ENCODE measurements at regions of chr18 and their contacts with region 1.

Region 1: GRCh38 chr18:50356036-50356945 is 18.6 kb upstream of the SKA1 start:
- DNase-seq: no peak
- H3K4me3 Mint-ChIP-seq: no peak overlapping the region
- H3K27ac Mint-ChIP-seq: no peak overlapping the region
- H3K4me1 Mint-ChIP-seq: peaks cover 8% of the 10 kb centered on the region
- H3K27me3 Mint-ChIP-seq: peaks cover 5% of the 10 kb centered on the region

Region 2: DNA sequence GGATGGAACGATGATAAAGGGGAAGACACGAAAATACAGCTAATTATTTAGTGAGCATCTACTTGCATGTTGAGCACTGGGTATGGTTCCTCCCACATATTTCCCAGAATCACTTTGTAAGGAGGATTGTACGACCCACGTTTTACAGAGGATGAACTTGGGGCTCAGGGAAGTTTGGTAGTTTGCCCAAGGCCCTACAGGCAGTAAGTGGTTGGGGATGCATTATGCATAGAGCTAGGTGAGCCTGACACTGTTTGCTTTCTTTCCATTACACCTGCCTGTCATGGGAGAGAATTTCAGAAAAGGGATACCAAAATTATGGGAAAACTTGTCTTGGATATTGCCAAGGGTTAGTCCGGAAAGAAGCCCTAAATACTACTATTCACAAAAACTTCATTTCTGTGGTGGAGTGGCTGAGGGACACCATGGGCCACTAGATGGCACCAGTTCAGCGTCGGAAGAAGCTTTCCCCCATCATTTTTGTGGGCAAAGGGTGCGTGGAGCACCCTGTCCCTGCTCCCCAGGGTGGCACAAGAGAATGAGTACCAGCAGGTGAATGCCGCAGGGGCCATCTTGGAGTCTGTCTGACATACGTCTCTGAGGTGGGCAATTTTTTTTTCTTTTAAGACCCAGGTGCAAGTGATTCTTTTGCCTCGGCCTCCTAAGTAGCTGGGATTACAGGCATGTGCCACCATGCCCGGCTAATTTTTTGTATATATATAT is 845.7 kb before region 1 on chr18:
- CTCF ChIA-PET with region 1: no interaction called
- intact Hi-C with region 1: loop called (anchors 10 kb)
- DNase-seq: peak; percentile 60
- H3K4me3 Mint-ChIP-seq: no peak overlapping the region
- H3K27ac Mint-ChIP-seq: no peak overlapping the region
- H3K4me1 Mint-ChIP-seq: no peaks in the 10 kb centered on the region
- H3K27me3 Mint-ChIP-seq: peaks cover 12% of the 10 kb centered on the region

Region 3: DNA sequence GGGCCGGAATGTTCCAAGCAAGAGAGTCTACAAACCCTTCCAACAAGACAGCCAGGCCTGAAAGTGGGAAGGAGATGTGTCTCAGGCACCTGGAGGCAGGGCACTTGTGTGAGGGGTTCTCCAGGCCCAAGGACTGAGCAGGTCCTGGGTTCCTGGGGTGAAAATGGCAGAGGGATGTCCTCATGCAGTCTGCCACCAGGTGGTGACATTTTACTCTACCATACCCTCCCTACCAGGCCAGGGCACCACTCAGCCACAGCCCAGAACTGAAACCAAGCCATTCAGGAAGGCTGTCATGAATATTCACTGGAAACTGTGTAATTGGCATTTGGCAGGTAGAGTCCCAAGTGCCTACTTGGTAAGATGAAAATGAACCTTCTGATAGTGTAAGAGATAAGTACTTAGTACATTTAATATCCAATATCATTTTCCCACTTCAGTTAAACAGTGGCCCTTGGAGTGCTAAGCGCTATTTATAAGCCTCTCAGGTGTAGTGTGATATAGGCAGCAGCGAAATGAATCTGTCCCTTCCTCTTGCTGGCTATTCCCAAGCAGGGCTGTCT is 346.4 kb before region 1 on chr18:
- CTCF ChIA-PET with region 1: interaction called, 7 read pairs
- intact Hi-C with region 1: loop called (anchors 1 kb)
- DNase-seq: peak; percentile 67
- H3K4me3 Mint-ChIP-seq: no peak overlapping the region
- H3K27ac Mint-ChIP-seq: no peak overlapping the region
- H3K4me1 Mint-ChIP-seq: no peaks in the 10 kb centered on the region
- H3K27me3 Mint-ChIP-seq: no peaks in the 10 kb centered on the region

Region 4: GRCh38 chr18:50170004-50170403 is 186.3 kb before region 1 on chr18:
- CTCF ChIA-PET with region 1: no interaction called
- intact Hi-C with region 1: no loop called
- DNase-seq: no peak
- H3K4me3 Mint-ChIP-seq: no peak overlapping the region
- H3K27ac Mint-ChIP-seq: no peak overlapping the region
- H3K4me1 Mint-ChIP-seq: no peaks in the 10 kb centered on the region
- H3K27me3 Mint-ChIP-seq: peaks cover 9% of the 10 kb centered on the region

Region 5: GRCh38 chr18:50203801-50204604 is 152.3 kb before region 1 on chr18:
- CTCF ChIA-PET with region 1: interaction called, 17 read pairs
- intact Hi-C with region 1: loop called (anchors 5 kb)
- DNase-seq: peak; percentile 47
- H3K4me3 Mint-ChIP-seq: peak overlapping the region; percentile 39
- H3K27ac Mint-ChIP-seq: no peak overlapping the region
- H3K4me1 Mint-ChIP-seq: peaks cover 10% of the 10 kb centered on the region
- H3K27me3 Mint-ChIP-seq: peaks cover 33% of the 10 kb centered on the region

Region 6: GRCh38 chr18:50266248-50266704 is 90.0 kb before region 1 on chr18 and contains the start of gene CFAP53:
- CTCF ChIA-PET with region 1: interaction called, 16 read pairs
- intact Hi-C with region 1: loop called (anchors 1 kb)
- DNase-seq: peak; percentile 90
- H3K4me3 Mint-ChIP-seq: peak within 1 kb of the TSS; percentile 76
- H3K27ac Mint-ChIP-seq: no peak within 1 kb of the TSS
- H3K4me1 Mint-ChIP-seq: peaks cover 16% of the 10 kb centered on the region
- H3K27me3 Mint-ChIP-seq: no peaks in the 10 kb centered on the region
- total RNA-seq, gene CFAP53: 0.40 to 0.43 TPM

Region 7: DNA sequence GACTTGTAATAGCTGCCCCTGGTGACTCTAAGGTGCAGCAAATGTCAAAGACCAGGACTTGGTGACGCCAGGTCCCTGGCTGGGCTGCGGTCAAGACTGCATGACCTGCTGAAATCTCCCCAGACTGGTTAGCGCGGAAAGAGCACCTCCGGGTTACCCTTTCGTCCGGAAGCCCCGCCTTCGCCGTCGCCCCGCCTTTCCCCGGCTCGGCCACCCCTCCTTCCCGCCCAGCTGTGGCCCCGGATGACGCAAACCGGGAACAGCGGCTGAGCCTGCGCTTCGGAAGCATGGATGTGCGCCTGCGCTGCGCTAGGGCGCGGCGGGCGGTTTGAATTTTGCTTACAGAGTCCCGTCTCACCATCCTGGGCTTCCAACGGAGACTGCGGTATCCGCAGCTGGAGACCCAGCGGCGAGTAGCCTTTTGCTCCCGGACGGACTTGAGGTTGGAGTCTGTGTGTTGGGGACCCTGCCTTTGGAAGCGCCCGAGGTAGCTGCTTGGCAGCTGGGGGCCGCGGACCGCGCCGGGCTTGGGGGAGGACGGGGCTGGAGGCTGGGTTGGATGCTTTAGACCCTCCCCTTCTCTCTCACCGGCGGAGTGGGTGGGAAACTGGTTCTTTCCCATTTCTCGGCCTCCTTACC is 18.6 kb after region 1 on chr18 and contains the start of gene SKA1:
- CTCF ChIA-PET with region 1: interaction called, 18 read pairs
- intact Hi-C with region 1: no loop called
- DNase-seq: peak; percentile 95
- H3K4me3 Mint-ChIP-seq: peak within 1 kb of the TSS; percentile 88
- H3K27ac Mint-ChIP-seq: peak within 1 kb of the TSS; percentile 87
- H3K4me1 Mint-ChIP-seq: peaks cover 2% of the 10 kb centered on the region
- H3K27me3 Mint-ChIP-seq: peaks cover 5% of the 10 kb centered on the region
- total RNA-seq, gene SKA1: 36.1 to 36.3 TPM

Measured in activated naive CD4-positive, alpha-beta T cell treated with anti-CD3 and anti-CD28 coated beads for 36 hours (primary cell).